AG04450 (cell line): ENCODE measurements at regions of chr15 and their contacts with region 1.

Region 1: GRCh38 chr15:90954712-90955671 is at the start of gene RCCD1:
- DNase-seq: peak; percentile 84
- H3K4me3 ChIP-seq: peak within 1 kb of the TSS; percentile 84
- H3K27ac ChIP-seq: peak within 1 kb of the TSS; percentile 86
- H3K27me3 ChIP-seq: no peaks in the 10 kb centered on the region
- CTCF ChIP-seq: no peak
- polyA plus RNA-seq, gene RCCD1: 5.6 and 6.1 TPM in 2 replicates

Region 2: GRCh38 chr15:90557186-90558084 is 397.6 kb before region 1 on chr15:
- CTCF ChIA-PET with region 1: no interaction called
- POLR2A ChIA-PET with region 1: no interaction called
- DNase-seq: no peak
- H3K4me3 ChIP-seq: no peak overlapping the region
- H3K27ac ChIP-seq: no peak overlapping the region
- H3K27me3 ChIP-seq: no peaks in the 10 kb centered on the region
- CTCF ChIP-seq: no peak

Region 3: DNA sequence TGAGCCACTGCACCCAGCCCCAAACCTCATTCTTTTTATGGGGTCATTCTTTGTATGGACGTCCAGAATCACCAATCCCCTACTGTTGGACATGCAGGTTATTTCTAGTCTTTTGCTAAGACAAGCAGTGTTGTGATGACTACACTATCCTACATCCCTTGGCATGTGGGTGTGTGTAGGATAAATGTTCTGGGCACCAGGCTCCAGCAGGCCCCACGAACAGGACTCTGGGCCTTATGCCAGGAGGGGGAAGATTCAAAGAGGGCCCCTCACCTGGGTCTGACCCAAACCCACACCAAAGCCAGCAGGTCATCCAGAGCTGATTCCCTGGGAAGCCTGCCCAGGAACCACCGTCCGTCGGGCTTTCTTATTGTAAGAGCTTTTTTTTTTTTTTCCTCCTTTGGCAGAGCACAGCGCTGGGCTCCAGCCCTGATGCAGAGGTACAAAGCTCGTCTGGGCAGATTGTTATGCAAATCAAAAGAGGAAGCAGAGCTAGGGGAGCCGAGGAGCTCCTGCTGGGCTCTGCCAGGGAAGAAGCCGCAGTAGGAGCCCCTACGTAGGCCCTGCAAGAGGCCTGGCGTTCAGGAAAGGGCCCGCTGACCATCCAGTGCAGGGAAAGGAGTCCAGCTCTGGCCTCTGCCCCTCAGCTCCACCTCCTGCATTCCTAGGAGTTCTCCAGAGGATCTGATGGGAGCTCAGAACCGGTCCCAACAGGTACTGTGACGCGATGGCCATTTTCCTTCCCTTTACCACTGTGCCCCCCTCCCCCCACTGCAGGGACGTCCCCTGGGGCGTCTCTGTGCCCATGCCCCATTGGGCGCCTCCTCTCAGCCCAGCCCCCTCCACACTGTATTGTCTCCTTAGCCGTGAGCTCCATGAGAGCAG is 115.6 kb before region 1 on chr15:
- CTCF ChIA-PET with region 1: no interaction called
- POLR2A ChIA-PET with region 1: no interaction called
- DNase-seq: no peak
- H3K4me3 ChIP-seq: no peak overlapping the region
- H3K27ac ChIP-seq: no peak overlapping the region
- H3K27me3 ChIP-seq: peaks cover 6% of the 10 kb centered on the region
- CTCF ChIP-seq: no peak

Region 4: GRCh38 chr15:90924375-90924774 is 30.6 kb before region 1 on chr15:
- CTCF ChIA-PET with region 1: interaction called, 18 read pairs
- POLR2A ChIA-PET with region 1: no interaction called
- DNase-seq: no peak
- H3K4me3 ChIP-seq: no peak overlapping the region
- H3K27ac ChIP-seq: no peak overlapping the region
- H3K27me3 ChIP-seq: no peaks in the 10 kb centered on the region
- CTCF ChIP-seq: no peak

Region 5: DNA sequence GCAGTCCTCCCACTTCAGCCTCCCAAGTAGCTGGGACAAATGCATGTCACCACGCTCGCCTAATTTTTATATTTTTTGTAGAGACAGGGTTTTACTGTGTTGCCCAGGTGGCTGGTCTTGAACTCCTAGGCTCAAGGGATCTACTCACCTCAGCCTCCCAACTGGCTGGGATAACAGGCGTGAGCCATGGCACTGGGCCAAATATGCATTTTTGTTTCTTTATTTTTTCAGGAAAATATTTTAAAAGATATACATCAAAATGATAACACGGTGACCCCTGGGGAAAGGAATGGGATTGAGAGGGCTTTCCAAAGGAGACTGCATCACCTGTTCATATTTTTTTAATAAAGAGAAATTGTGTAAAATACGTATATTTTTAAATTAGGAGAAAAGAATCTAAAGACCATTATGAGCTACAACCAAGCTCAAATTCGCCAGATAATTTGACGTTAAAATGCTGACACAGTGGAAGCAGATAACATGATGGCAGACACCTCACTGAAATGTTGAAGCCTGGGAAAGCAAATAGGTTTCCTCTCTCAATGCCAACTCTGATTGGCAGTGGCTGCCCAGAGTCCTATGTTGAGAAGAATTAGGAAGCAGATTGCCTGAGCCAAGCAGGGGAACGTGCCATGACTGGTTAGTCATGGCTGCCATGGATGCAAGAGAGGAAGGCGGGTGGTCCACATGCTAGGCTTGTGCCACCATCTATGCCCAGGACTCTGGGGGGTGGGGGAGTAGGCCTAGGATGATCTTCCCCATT is 16.9 kb before region 1 on chr15:
- CTCF ChIA-PET with region 1: interaction called, 64 read pairs
- POLR2A ChIA-PET with region 1: interaction called, 19 read pairs
- DNase-seq: no peak
- H3K4me3 ChIP-seq: no peak overlapping the region
- H3K27ac ChIP-seq: no peak overlapping the region
- H3K27me3 ChIP-seq: no peaks in the 10 kb centered on the region
- CTCF ChIP-seq: no peak

Region 6: GRCh38 chr15:90982135-90982534 is 27.1 kb after region 1 on chr15:
- CTCF ChIA-PET with region 1: interaction called, 70 read pairs
- POLR2A ChIA-PET with region 1: interaction called, 3 read pairs
- DNase-seq: no peak
- H3K4me3 ChIP-seq: no peak overlapping the region
- H3K27ac ChIP-seq: no peak overlapping the region
- H3K27me3 ChIP-seq: no peaks in the 10 kb centered on the region
- CTCF ChIP-seq: no peak

Region 7: GRCh38 chr15:91032919-91033803 is 78.2 kb after region 1 on chr15:
- CTCF ChIA-PET with region 1: interaction called, 19 read pairs
- POLR2A ChIA-PET with region 1: no interaction called
- DNase-seq: no peak
- H3K4me3 ChIP-seq: no peak overlapping the region
- H3K27ac ChIP-seq: no peak overlapping the region
- H3K27me3 ChIP-seq: peaks cover 19% of the 10 kb centered on the region
- CTCF ChIP-seq: peak; percentile 50

Region 8: GRCh38 chr15:91055548-91056331 is 100.7 kb after region 1 on chr15:
- CTCF ChIA-PET with region 1: interaction called, 157 read pairs
- POLR2A ChIA-PET with region 1: no interaction called
- DNase-seq: peak; percentile 11
- H3K4me3 ChIP-seq: no peak overlapping the region
- H3K27ac ChIP-seq: no peak overlapping the region
- H3K27me3 ChIP-seq: peaks cover 12% of the 10 kb centered on the region
- CTCF ChIP-seq: peak; percentile 73

Region 9: GRCh38 chr15:91525751-91526150 is 570.8 kb after region 1 on chr15:
- CTCF ChIA-PET with region 1: no interaction called
- POLR2A ChIA-PET with region 1: no interaction called
- DNase-seq: no peak
- H3K4me3 ChIP-seq: no peak overlapping the region
- H3K27ac ChIP-seq: peak overlapping the region; percentile 31
- H3K27me3 ChIP-seq: no peaks in the 10 kb centered on the region
- CTCF ChIP-seq: no peak